ENCODE measurements at regions of chr16 and their contacts with region 1.

Region 1: GRCh38 chr16:27367461-27368357 is 34.3 kb upstream of the IL21R start:
- DNase-seq: peak; percentile 70 to 98 (median 84)
- ATAC-seq: peak; percentile 81
- H3K4me3 ChIP-seq: peak overlapping the region; percentile 1 to 11
- H3K4me3 Mint-ChIP-seq: peak overlapping the region; percentile 26
- H3K27ac ChIP-seq: peak overlapping the region; percentile 93 to 97
- H3K27ac Mint-ChIP-seq: peak overlapping the region; percentile 99
- H3K4me1 ChIP-seq: peaks cover 58% of the 10 kb centered on the region
- H3K4me1 Mint-ChIP-seq: peaks cover 69% of the 10 kb centered on the region
- H3K27me3 ChIP-seq: no peaks in the 10 kb centered on the region
- H3K27me3 Mint-ChIP-seq: no peaks in the 10 kb centered on the region
- CTCF ChIP-seq: peak; percentile 73

Region 2: DNA sequence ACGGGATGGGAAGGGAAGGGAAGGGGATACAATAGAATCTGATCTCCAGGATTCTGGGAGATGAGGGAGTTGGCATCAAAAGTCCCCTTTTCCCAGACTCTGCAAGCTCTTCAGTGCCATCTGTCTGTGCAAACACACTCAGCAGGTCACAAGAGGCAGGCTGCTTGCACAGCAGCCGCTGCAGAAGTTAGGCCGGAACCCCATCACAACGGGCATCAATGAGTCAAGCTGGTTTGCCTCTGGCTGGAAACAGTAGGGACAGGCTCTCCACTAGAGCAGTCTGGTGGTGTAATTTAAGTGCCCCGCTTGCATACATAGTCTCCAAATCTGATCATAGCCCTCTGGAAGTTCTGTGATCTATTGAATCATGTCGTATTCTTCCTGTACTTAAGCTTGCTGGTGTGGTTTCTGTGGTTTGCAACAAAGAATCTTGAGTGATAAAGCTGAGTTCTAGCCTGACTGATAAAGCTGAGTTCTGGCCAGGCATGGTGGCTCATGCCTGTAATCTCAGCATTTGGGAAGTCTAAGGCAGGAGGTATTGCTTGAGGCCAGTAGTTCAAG is 198.1 kb before region 1 on chr16:
- CTCF ChIA-PET with region 1: interaction called, 18 read pairs
- POLR2A ChIA-PET with region 1: interaction called, 7 read pairs
- intact Hi-C with region 1: loop called in 1 of 2 experiments (anchors 1 kb)
- DNase-seq: peak; percentile 54 to 93 (median 77)
- ATAC-seq: peak; percentile 87
- H3K4me3 ChIP-seq: no peak overlapping the region
- H3K4me3 Mint-ChIP-seq: peak overlapping the region; percentile 51
- H3K27ac ChIP-seq: peak overlapping the region in 1 of 2 experiments; percentile 53
- H3K27ac Mint-ChIP-seq: peak overlapping the region; percentile 89
- H3K4me1 ChIP-seq: peaks cover 63% of the 10 kb centered on the region
- H3K4me1 Mint-ChIP-seq: peaks cover 64% of the 10 kb centered on the region
- H3K27me3 ChIP-seq: no peaks in the 10 kb centered on the region
- H3K27me3 Mint-ChIP-seq: no peaks in the 10 kb centered on the region
- CTCF ChIP-seq: no peak

Region 3: DNA sequence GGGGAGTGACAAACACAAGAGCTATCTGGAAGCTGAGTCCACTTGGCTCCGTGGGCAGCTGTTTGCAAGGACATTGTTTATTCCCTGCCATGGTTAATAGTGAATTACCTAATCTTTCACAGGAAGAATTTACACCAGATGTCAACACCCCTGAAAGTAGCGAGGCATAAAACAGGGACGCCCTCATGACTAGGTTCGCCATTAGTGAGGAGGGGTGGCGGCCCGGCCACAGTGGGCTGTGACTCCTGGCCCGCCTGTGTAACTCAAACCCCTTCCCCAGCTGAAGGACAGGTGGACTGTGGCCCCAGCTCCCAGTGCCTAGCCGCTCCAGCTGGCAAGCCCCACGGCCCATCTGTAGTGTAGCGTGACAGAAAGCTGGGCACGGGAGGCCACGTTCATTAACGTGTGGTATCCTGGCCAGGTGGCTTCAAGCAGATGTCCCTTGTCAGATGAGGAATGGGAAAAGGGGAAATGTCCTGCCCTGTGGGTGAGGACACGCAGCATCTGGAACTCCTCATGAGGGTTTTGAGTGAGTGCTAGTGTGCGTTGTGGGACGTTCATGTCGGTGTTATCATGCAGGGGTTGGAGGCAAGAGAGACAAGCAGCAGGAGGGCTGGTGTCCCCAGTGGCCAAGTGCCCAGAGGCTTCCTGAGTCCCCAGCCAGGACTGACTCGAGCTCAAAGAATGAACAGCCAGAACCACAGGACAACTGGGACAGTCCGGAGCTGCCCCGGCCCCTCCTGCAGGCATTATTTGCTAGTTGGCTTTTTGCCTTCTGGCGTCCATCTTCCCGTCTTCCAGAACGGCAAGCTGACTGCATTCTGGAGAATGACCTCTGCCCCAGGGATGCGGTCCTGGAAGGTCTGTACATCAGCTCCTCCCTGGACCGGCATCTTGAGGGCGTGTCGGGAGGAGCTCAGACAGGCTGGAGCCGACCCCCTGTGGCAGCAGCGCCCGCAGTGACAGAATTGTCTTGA is 145.2 kb before region 1 on chr16:
- CTCF ChIA-PET with region 1: interaction called, 14 read pairs
- POLR2A ChIA-PET with region 1: interaction called, 3 read pairs
- intact Hi-C with region 1: no loop called
- DNase-seq: no peak
- ATAC-seq: no peak
- H3K4me3 ChIP-seq: no peak overlapping the region
- H3K4me3 Mint-ChIP-seq: no peak overlapping the region
- H3K27ac ChIP-seq: no peak overlapping the region
- H3K27ac Mint-ChIP-seq: peak overlapping the region; percentile 62
- H3K4me1 ChIP-seq: peaks cover 9% of the 10 kb centered on the region
- H3K4me1 Mint-ChIP-seq: peaks cover 16% of the 10 kb centered on the region
- H3K27me3 ChIP-seq: no peaks in the 10 kb centered on the region
- H3K27me3 Mint-ChIP-seq: no peaks in the 10 kb centered on the region
- CTCF ChIP-seq: no peak

Region 4: DNA sequence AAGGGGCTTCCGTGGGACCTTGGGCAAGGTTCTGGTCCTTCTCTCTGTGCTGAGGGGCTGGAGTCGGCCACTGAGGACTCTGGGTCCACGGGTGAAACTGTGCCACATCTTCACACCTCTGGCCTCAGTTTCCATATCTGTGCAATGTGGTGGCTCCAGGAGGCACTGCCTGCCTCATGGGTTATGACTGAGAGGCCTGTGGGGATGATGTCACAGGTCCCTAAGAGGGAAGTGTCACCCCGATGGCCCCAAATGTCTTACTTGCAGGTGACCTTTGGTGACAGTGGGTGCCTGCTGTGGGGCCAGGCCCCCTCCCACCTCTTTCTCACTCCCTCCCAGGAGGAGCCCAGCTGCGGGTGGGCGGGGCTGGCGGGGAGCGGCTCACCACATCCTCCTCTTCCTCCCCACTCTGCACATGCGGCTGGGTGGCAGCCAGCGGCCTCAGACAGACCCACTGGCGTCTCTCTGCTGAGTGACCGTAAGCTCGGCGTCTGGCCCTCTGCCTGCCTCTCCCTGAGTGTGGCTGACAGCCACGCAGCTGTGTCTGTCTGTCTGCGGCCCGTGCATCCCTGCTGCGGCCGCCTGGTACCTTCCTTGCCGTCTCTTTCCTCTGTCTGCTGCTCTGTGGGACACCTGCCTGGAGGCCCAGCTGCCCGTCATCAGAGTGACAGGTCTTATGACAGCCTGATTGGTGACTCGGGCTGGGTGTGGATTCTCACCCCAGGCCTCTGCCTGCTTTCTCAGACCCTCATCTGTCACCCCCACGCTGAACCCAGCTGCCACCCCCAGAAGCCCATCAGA is 34.3 kb after region 1 on chr16 and contains the start of gene IL21R:
- CTCF ChIA-PET with region 1: interaction called, 22 read pairs
- POLR2A ChIA-PET with region 1: interaction called, 30 read pairs
- intact Hi-C with region 1: loop called (anchors 1 kb)
- DNase-seq: peak; percentile 75 to 97 (median 92)
- ATAC-seq: peak; percentile 78
- H3K4me3 ChIP-seq: peak within 1 kb of the TSS; percentile 72 to 78
- H3K4me3 Mint-ChIP-seq: peak within 1 kb of the TSS; percentile 97
- H3K27ac ChIP-seq: peak within 1 kb of the TSS; percentile 85 to 86
- H3K27ac Mint-ChIP-seq: peak within 1 kb of the TSS; percentile 99
- H3K4me1 ChIP-seq: peaks cover 48% of the 10 kb centered on the region
- H3K4me1 Mint-ChIP-seq: peaks cover 69% of the 10 kb centered on the region
- H3K27me3 ChIP-seq: no peaks in the 10 kb centered on the region
- H3K27me3 Mint-ChIP-seq: no peaks in the 10 kb centered on the region
- CTCF ChIP-seq: no peak
- total RNA-seq, gene IL21R: 113 to 121 TPM

Region 5: GRCh38 chr16:27449434-27450195 is 81.9 kb after region 1 on chr16:
- CTCF ChIA-PET with region 1: interaction called, 33 read pairs
- POLR2A ChIA-PET with region 1: interaction called, 8 read pairs
- intact Hi-C with region 1: loop called (anchors 1 kb)
- DNase-seq: peak; percentile 63 to 97 (median 80)
- ATAC-seq: peak; percentile 60
- H3K4me3 ChIP-seq: peak overlapping the region; percentile 17 to 26
- H3K4me3 Mint-ChIP-seq: peak overlapping the region; percentile 70
- H3K27ac ChIP-seq: peak overlapping the region; percentile 60 to 91
- H3K27ac Mint-ChIP-seq: peak overlapping the region; percentile 99
- H3K4me1 ChIP-seq: peaks cover 68% of the 10 kb centered on the region
- H3K4me1 Mint-ChIP-seq: peaks cover 87% of the 10 kb centered on the region
- H3K27me3 ChIP-seq: no peaks in the 10 kb centered on the region
- H3K27me3 Mint-ChIP-seq: no peaks in the 10 kb centered on the region
- CTCF ChIP-seq: no peak

Region 6: DNA sequence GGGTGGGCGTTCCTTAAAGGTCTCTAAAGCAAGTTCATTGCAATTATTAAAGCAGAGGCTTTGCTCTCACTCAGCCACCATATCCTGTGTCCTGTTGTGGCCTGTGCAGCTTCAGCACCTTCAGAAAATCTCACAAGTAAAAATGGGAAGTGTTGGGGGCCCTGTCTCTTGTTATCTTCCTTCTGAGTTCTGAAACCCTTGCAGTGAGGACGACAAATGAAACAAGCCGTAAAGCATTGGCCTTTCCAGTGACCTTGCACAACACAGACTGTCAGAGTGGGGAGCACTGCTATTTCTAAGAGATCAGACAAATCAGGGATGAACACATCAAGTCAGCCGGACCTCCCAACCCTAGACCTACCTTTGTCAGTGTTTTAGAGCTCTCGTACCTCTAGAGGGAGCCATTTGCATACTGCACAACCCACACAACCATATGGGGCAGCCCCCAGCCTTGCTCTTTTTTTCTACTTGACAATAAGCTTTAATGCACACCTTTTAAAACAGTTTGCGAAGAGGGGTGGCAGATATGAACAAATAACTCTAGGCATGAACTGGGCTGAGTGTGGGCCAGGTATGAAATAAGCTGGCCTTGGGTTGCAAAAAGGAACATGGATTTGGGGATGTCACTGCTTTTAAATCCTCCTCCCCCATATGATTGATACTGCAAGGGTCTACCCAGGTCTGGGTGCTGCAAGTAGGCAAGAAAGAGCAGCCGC is 272.0 kb after region 1 on chr16:
- CTCF ChIA-PET with region 1: no interaction called
- POLR2A ChIA-PET with region 1: no interaction called
- intact Hi-C with region 1: no loop called
- DNase-seq: peak in 2 of 9 experiments; percentile 13 to 34
- ATAC-seq: no peak
- H3K4me3 ChIP-seq: no peak overlapping the region
- H3K4me3 Mint-ChIP-seq: no peak overlapping the region
- H3K27ac ChIP-seq: no peak overlapping the region
- H3K27ac Mint-ChIP-seq: no peak overlapping the region
- H3K4me1 ChIP-seq: no peaks in the 10 kb centered on the region
- H3K4me1 Mint-ChIP-seq: no peaks in the 10 kb centered on the region
- H3K27me3 ChIP-seq: no peaks in the 10 kb centered on the region
- H3K27me3 Mint-ChIP-seq: no peaks in the 10 kb centered on the region
- CTCF ChIP-seq: no peak